ENCODE measurements at regions of chr2 and their contacts with region 1.

Region 1: DNA sequence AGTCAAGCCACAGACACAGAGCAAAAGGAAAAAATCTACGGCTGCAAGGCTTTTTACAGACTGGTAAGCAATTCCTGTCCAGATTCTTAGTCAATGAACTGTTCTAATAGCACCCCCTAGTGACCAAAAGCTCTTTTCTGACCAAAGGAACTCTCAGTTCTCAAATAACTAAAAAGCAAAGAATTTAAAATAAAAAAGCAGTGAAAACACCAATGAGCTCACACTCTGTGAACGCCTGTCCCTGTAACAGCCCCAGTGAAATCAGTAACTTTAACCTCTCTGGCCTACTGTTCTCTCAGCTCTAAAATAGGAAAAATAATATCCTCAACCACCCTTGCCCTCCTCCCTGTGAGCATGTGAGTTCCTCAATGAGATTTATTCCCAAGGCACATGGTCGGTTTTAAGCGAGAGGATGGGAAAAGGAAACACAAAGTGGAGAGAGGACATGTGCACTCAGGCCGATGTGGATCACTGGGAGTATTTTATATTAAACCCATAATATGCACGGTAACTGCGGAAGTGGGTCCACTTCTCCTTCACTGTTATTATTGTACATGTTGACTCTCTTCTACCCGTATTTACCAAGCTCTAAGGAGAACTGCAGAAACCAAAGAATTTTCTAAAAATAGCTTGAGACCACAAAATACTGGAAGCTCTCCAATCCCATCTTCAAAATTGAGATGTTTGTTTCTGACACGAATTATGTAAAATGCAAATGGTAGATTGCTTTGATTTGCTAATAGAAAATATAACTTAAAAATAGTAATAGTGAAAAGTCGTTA is 128.5 kb downstream of the STK39 start:
- DNase-seq: peak in 6 of 9 donors; percentile 10 to 41 (median 36)
- ATAC-seq: peak; percentile 55
- H3K4me3 ChIP-seq: no peak overlapping the region
- H3K4me3 Mint-ChIP-seq: no peak overlapping the region
- H3K27ac ChIP-seq: no peak overlapping the region
- H3K27ac Mint-ChIP-seq: no peak overlapping the region
- H3K4me1 ChIP-seq: peaks cover 0 to 4% of the 10 kb centered on the region in 2 donors
- H3K4me1 Mint-ChIP-seq: peaks cover 0 to 2% (median 0%) of the 10 kb centered on the region in 7 donors
- H3K27me3 ChIP-seq: no peaks in the 10 kb centered on the region
- H3K27me3 Mint-ChIP-seq: no peaks in the 10 kb centered on the region

Region 2: DNA sequence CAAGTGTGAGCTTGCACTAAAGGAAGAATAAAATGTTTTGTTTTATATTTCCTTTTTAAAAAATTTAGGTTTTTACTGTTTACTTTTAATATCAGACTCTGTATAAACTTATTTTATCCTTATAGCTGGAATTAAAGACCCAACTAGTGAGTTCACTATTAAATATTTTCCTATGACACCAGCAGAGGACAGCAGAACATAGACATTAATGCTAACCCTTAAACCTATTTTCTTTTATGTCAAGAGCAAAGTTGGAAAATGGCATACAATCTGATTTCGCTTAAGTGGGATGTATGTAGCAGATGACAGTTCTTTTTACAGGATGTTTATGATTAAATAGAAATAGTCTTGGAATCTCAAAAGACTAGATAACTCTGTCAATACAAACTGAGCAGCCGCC is 1418.8 kb before region 1 on chr2:
- CTCF ChIA-PET with region 1: no interaction called
- POLR2A ChIA-PET with region 1: no interaction called
- intact Hi-C with region 1: loop called in 1 of 2 experiments (anchors 2 kb)
- DNase-seq: peak in 2 of 9 donors; percentile 6 to 18
- ATAC-seq: no peak
- H3K4me3 ChIP-seq: no peak overlapping the region
- H3K4me3 Mint-ChIP-seq: no peak overlapping the region
- H3K27ac ChIP-seq: no peak overlapping the region
- H3K27ac Mint-ChIP-seq: no peak overlapping the region
- H3K4me1 ChIP-seq: no peaks in the 10 kb centered on the region
- H3K4me1 Mint-ChIP-seq: no peaks in the 10 kb centered on the region
- H3K27me3 ChIP-seq: no peaks in the 10 kb centered on the region
- H3K27me3 Mint-ChIP-seq: peaks cover 0 to 8% (median 0%) of the 10 kb centered on the region in 5 donors

Region 3: DNA sequence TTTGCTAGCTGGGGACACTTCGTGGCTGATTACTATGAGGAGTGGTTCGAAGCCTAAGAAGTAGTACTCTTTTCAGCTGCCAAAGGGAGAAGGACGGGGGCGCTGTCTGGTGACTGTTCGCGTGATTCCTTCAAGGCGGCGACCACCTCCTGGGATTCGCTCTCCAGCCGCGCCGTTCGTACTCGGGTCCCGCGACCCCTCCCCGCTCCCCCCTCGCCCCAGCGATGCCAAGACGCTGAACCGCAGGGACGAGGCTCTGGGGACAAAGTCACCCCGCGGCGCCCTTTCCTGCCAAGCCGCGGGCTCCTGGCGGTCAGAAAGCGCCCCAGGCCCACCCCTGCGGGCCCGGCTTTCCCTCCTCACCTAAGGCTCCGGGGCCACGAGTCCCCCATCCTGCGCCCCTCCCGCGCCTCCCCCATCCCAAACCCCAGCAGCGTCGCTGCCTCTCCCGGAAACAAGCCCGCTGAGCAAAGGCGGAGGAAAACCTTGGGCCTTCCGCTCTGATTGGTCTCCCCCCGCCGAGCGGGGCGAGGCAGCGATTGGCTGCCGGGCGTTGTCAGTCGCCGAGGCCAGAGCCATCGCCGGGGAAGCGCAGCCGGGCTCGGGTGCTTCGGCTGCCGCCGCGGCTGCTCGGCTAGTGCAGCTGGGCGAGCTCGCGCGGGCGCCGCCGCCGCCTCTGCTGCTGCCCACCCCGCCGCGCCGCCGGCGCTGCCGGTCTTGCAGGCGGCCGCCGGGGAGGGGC is 826.3 kb before region 1 on chr2:
- CTCF ChIA-PET with region 1: no interaction called
- POLR2A ChIA-PET with region 1: no interaction called
- intact Hi-C with region 1: loop called in 1 of 2 experiments (anchors 10 kb)
- DNase-seq: peak; percentile 23 to 70 (median 39)
- ATAC-seq: peak; percentile 90
- H3K4me3 ChIP-seq: peak within 1 kb of the TSS; percentile 27
- H3K4me3 Mint-ChIP-seq: peak within 1 kb of the TSS; percentile 69 to 89 (median 83)
- H3K27ac ChIP-seq: no peak within 1 kb of the TSS
- H3K27ac Mint-ChIP-seq: no peak within 1 kb of the TSS
- H3K4me1 ChIP-seq: peaks cover 0 to 7% of the 10 kb centered on the region in 2 donors
- H3K4me1 Mint-ChIP-seq: peaks cover 11 to 29% (median 15%) of the 10 kb centered on the region in 7 donors
- H3K27me3 ChIP-seq: peaks cover 0 to 6% of the 10 kb centered on the region in 2 donors
- H3K27me3 Mint-ChIP-seq: peaks cover 41 to 62% (median 50%) of the 10 kb centered on the region in 5 donors

Region 4: DNA sequence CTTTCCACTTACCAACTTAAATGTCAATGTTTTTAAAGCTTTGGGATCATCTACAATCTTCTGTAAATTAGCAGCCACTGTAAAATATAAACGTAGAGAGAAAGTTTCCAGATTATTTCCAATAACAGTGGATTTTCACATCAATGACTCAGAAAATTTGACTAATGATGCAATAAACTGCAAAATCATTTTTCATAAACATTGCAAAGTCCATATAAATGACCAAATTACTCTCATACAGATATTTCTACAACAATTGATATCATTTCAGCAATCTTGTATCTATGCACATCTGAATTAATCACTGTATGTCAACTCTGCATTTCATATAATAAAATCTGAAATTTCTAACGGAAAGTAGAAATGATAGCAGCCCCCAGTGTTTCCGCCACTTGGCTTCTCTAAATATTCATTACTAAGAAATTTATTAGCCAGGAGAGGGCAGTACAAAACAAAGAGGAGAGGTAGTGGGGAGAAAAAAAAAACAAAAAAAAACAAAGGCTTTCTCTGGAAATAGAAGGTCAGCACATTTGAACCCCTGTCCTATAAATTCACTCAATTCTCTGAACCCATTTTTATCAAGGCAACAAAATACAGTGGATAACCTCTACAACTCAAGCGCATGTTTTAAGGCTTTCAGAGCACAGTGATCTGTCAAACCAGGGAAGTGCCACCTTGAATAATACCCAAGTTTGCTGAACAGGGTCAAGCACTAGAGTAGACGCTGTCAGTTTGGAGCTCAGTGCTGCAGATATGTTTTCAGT is 154.1 kb before region 1 on chr2:
- CTCF ChIA-PET with region 1: no interaction called
- POLR2A ChIA-PET with region 1: no interaction called
- intact Hi-C with region 1: loop called in 1 of 2 experiments (anchors 1 kb)
- DNase-seq: no peak
- ATAC-seq: no peak
- H3K4me3 ChIP-seq: no peak overlapping the region
- H3K4me3 Mint-ChIP-seq: no peak overlapping the region
- H3K27ac ChIP-seq: no peak overlapping the region
- H3K27ac Mint-ChIP-seq: no peak overlapping the region
- H3K4me1 ChIP-seq: no peaks in the 10 kb centered on the region
- H3K4me1 Mint-ChIP-seq: peaks cover 0 to 2% (median 0%) of the 10 kb centered on the region in 7 donors
- H3K27me3 ChIP-seq: no peaks in the 10 kb centered on the region
- H3K27me3 Mint-ChIP-seq: no peaks in the 10 kb centered on the region

Region 5: GRCh38 chr2:168166902-168167510 is 48.1 kb after region 1 on chr2:
- CTCF ChIA-PET with region 1: interaction called, 3 read pairs
- POLR2A ChIA-PET with region 1: no interaction called
- intact Hi-C with region 1: loop called in 1 of 2 experiments (anchors 5 kb)
- DNase-seq: no peak
- ATAC-seq: no peak
- H3K4me3 ChIP-seq: no peak overlapping the region
- H3K4me3 Mint-ChIP-seq: no peak overlapping the region
- H3K27ac ChIP-seq: no peak overlapping the region
- H3K27ac Mint-ChIP-seq: peak overlapping the region in 2 of 9 donors; percentile 4 to 9
- H3K4me1 ChIP-seq: no peaks in the 10 kb centered on the region
- H3K4me1 Mint-ChIP-seq: peaks cover 25 to 62% (median 54%) of the 10 kb centered on the region in 7 donors
- H3K27me3 ChIP-seq: no peaks in the 10 kb centered on the region
- H3K27me3 Mint-ChIP-seq: no peaks in the 10 kb centered on the region

Region 6: GRCh38 chr2:168278424-168278888 is 159.5 kb after region 1 on chr2:
- CTCF ChIA-PET with region 1: no interaction called
- POLR2A ChIA-PET with region 1: no interaction called
- intact Hi-C with region 1: no loop called
- DNase-seq: no peak
- ATAC-seq: no peak
- H3K4me3 ChIP-seq: no peak overlapping the region
- H3K4me3 Mint-ChIP-seq: no peak overlapping the region
- H3K27ac ChIP-seq: no peak overlapping the region
- H3K27ac Mint-ChIP-seq: no peak overlapping the region
- H3K4me1 ChIP-seq: no peaks in the 10 kb centered on the region
- H3K4me1 Mint-ChIP-seq: no peaks in the 10 kb centered on the region
- H3K27me3 ChIP-seq: no peaks in the 10 kb centered on the region
- H3K27me3 Mint-ChIP-seq: peaks cover 4 to 31% (median 10%) of the 10 kb centered on the region in 5 donors

Region 7: GRCh38 chr2:168545439-168546082 is 426.6 kb after region 1 on chr2:
- CTCF ChIA-PET with region 1: no interaction called
- POLR2A ChIA-PET with region 1: no interaction called
- intact Hi-C with region 1: no loop called
- DNase-seq: no peak
- ATAC-seq: no peak
- H3K4me3 ChIP-seq: no peak overlapping the region
- H3K4me3 Mint-ChIP-seq: peak overlapping the region in 1 of 10 donors; percentile 27
- H3K27ac ChIP-seq: no peak overlapping the region
- H3K27ac Mint-ChIP-seq: peak overlapping the region in 3 of 9 donors; percentile 33 to 56 (median 38)
- H3K4me1 ChIP-seq: peaks cover 0 to 29% of the 10 kb centered on the region in 2 donors
- H3K4me1 Mint-ChIP-seq: peaks cover 3 to 82% (median 71%) of the 10 kb centered on the region in 7 donors
- H3K27me3 ChIP-seq: no peaks in the 10 kb centered on the region
- H3K27me3 Mint-ChIP-seq: no peaks in the 10 kb centered on the region